Panc1 (cell line): ENCODE measurements at regions of chr5 and their contacts with region 1.

Region 1: GRCh38 chr5:61280205-61280604 is 51.9 kb upstream of the ZSWIM6 start:
- DNase-seq: no peak
- ATAC-seq: peak; percentile 34; the same call in 1 of the 2 replicates
- H3K4me3 ChIP-seq: no peak overlapping the region
- H3K27ac ChIP-seq: no peak overlapping the region
- H3K4me1 ChIP-seq: no peaks in the 10 kb centered on the region
- H3K27me3 ChIP-seq: no peaks in the 10 kb centered on the region
- CTCF ChIP-seq: no peak

Region 2: GRCh38 chr5:60856066-60856465 is 424.1 kb before region 1 on chr5:
- CTCF ChIA-PET with region 1: no interaction called
- POLR2A ChIA-PET with region 1: no interaction called
- in situ Hi-C with region 1: no loop called
- intact Hi-C with region 1: no loop called
- DNase-seq: no peak
- ATAC-seq: no peak
- H3K4me3 ChIP-seq: no peak overlapping the region
- H3K27ac ChIP-seq: no peak overlapping the region
- H3K4me1 ChIP-seq: no peaks in the 10 kb centered on the region
- H3K27me3 ChIP-seq: no peaks in the 10 kb centered on the region
- CTCF ChIP-seq: no peak

Region 3: DNA sequence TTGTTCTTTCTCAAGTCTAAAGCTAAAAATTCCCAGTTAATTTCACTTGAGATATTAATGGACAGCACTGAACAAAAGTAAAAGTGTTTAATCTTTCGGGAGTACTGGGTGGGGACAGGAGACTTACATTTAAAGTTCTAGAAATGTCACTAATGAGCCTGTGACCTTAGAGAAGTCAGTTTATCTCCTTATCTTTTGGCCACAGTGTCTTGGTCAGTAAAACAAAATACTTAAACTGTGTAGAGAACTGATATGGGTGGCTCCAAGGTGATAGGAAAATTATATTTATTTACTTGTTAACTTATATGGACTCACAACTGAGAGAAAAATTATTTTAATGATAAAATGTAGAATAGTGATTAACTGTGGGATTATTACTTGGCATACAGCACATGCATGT is 1141.2 kb after region 1 on chr5:
- CTCF ChIA-PET with region 1: no interaction called
- POLR2A ChIA-PET with region 1: no interaction called
- in situ Hi-C with region 1: no loop called
- intact Hi-C with region 1: loop called (anchors 10 kb)
- DNase-seq: no peak
- ATAC-seq: no peak
- H3K4me3 ChIP-seq: no peak overlapping the region
- H3K27ac ChIP-seq: no peak overlapping the region
- H3K4me1 ChIP-seq: no peaks in the 10 kb centered on the region
- H3K27me3 ChIP-seq: no peaks in the 10 kb centered on the region
- CTCF ChIP-seq: no peak